ENCODE measurements at regions of chr7 and their contacts with region 1.

Region 1: DNA sequence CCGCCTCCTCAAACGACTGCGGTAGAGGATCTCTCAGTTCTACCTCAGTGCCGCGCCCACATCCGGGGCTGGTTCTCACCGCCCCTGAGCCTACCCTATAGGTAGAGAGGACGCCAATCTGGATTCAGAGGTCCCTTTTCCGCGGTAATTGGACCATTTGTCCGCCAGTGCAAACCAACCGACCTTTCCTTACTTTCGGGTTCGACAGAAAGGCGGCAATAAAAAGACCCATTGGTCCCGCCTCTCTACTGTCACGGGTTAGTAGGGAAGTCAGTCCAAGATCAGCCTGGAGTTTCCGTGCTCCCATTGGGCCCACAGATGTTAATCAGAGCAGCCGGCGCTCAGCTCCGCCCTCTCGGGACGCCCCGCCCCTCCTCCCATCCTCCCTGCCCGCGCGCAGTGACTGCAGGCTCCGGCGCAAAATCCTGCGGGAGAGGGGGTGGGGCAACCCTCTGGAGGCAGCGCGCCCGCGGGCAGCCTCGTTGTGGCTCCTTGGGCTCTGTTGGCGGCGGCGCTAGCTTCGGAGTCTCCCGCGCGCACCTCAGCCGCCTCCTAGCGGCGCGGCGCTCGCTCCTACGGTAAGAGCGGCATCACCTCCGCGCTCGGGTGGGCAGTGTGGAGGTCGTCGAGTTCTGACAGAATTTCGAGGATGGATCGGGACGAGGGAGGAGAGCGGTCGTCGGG is at the starts of genes PHTF2 and TMEM60:
- DNase-seq: peak; percentile 96
- ATAC-seq: peak; percentile 93
- H3K4me3 Mint-ChIP-seq: peak within 1 kb of the TSS; percentile 83
- H3K27ac Mint-ChIP-seq: peak within 1 kb of the TSS; percentile 94
- H3K4me1 Mint-ChIP-seq: peaks cover 68% of the 10 kb centered on the region
- H3K27me3 Mint-ChIP-seq: no peaks in the 10 kb centered on the region
- total RNA-seq, gene PHTF2: 25.5 to 26.7 TPM
- total RNA-seq, gene TMEM60: 7.9 to 10.1 TPM

Region 2: GRCh38 chr7:76393116-76394031 is 1405.2 kb before region 1 on chr7:
- CTCF ChIA-PET with region 1: no interaction called
- POLR2A ChIA-PET with region 1: no interaction called
- intact Hi-C with region 1: loop called in 1 of 2 experiments (anchors 5 kb)
- DNase-seq: peak; percentile 94
- ATAC-seq: peak; percentile 85
- H3K4me3 Mint-ChIP-seq: peak overlapping the region; percentile 76
- H3K27ac Mint-ChIP-seq: peak overlapping the region; percentile 98
- H3K4me1 Mint-ChIP-seq: peaks cover 22% of the 10 kb centered on the region
- H3K27me3 Mint-ChIP-seq: no peaks in the 10 kb centered on the region

Region 3: GRCh38 chr7:77498659-77499422 is 299.7 kb before region 1 on chr7:
- CTCF ChIA-PET with region 1: no interaction called
- POLR2A ChIA-PET with region 1: no interaction called
- intact Hi-C with region 1: no loop called
- DNase-seq: no peak
- ATAC-seq: no peak
- H3K4me3 Mint-ChIP-seq: no peak overlapping the region
- H3K27ac Mint-ChIP-seq: no peak overlapping the region
- H3K4me1 Mint-ChIP-seq: no peaks in the 10 kb centered on the region
- H3K27me3 Mint-ChIP-seq: peaks cover 2% of the 10 kb centered on the region

Region 4: GRCh38 chr7:77696198-77697028 is 102.1 kb before region 1 on chr7 and contains the start of gene RSBN1L:
- CTCF ChIA-PET with region 1: no interaction called
- POLR2A ChIA-PET with region 1: interaction called, 4 read pairs
- intact Hi-C with region 1: loop called (anchors 1 kb)
- DNase-seq: peak; percentile 99
- ATAC-seq: peak; percentile 98
- H3K4me3 Mint-ChIP-seq: peak within 1 kb of the TSS; percentile 99
- H3K27ac Mint-ChIP-seq: peak within 1 kb of the TSS; percentile 95
- H3K4me1 Mint-ChIP-seq: peaks cover 45% of the 10 kb centered on the region
- H3K27me3 Mint-ChIP-seq: no peaks in the 10 kb centered on the region
- total RNA-seq, gene RSBN1L: 21.0 to 26.3 TPM

Region 5: GRCh38 chr7:77830649-77831355 is 32.3 kb after region 1 on chr7:
- CTCF ChIA-PET with region 1: interaction called, 7 read pairs
- POLR2A ChIA-PET with region 1: no interaction called
- intact Hi-C with region 1: loop called (anchors 1 kb)
- DNase-seq: no peak
- ATAC-seq: no peak
- H3K4me3 Mint-ChIP-seq: no peak overlapping the region
- H3K27ac Mint-ChIP-seq: peak overlapping the region; percentile 71
- H3K4me1 Mint-ChIP-seq: peaks cover 58% of the 10 kb centered on the region
- H3K27me3 Mint-ChIP-seq: no peaks in the 10 kb centered on the region

Region 6: DNA sequence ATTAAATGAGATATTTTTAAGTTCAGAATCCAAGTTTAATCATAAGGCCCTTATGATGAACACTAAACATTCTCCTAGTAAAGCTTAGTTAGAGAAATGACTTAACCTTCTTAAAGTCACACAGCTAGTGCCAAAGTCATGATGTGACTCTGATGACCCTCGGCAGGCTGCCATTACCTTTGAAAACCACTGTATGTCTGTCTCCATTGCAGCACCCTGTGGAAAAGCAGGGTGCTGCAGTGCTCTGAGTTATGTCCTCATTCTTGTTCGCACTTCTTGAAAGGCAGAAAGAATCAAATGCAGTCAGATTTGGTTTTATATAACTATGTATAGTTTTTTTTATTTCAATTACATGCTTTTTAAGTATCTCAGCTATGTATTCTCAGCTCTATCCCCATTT is 105.1 kb after region 1 on chr7:
- CTCF ChIA-PET with region 1: no interaction called
- POLR2A ChIA-PET with region 1: no interaction called
- intact Hi-C with region 1: loop called (anchors 5 kb)
- DNase-seq: peak; percentile 30
- ATAC-seq: peak; percentile 79
- H3K4me3 Mint-ChIP-seq: no peak overlapping the region
- H3K27ac Mint-ChIP-seq: no peak overlapping the region
- H3K4me1 Mint-ChIP-seq: peaks cover 4% of the 10 kb centered on the region
- H3K27me3 Mint-ChIP-seq: no peaks in the 10 kb centered on the region

Region 7: DNA sequence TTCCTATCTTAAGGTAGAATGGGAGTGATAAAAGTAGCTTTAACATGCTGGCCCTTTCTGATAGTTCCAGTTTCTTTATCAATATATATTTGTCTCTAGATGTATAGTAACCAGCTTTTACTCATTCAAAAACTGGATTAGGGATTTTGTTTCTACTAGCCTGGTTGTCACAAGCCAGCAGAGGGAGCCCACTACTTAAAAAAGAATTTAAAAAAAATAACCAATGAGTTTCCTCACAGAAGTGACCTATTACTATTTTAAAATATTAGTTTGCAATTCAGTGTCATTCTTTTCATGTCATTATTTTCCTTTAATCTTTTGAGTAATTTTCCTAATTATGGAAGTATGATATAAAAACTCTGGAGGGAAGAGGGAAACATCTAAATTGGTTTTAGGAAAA is 142.1 kb after region 1 on chr7:
- CTCF ChIA-PET with region 1: interaction called, 5 read pairs
- POLR2A ChIA-PET with region 1: no interaction called
- intact Hi-C with region 1: loop called (anchors 2 to 5 kb)
- DNase-seq: peak; percentile 21
- ATAC-seq: no peak
- H3K4me3 Mint-ChIP-seq: no peak overlapping the region
- H3K27ac Mint-ChIP-seq: no peak overlapping the region
- H3K4me1 Mint-ChIP-seq: peaks cover 13% of the 10 kb centered on the region
- H3K27me3 Mint-ChIP-seq: no peaks in the 10 kb centered on the region

Region 8: DNA sequence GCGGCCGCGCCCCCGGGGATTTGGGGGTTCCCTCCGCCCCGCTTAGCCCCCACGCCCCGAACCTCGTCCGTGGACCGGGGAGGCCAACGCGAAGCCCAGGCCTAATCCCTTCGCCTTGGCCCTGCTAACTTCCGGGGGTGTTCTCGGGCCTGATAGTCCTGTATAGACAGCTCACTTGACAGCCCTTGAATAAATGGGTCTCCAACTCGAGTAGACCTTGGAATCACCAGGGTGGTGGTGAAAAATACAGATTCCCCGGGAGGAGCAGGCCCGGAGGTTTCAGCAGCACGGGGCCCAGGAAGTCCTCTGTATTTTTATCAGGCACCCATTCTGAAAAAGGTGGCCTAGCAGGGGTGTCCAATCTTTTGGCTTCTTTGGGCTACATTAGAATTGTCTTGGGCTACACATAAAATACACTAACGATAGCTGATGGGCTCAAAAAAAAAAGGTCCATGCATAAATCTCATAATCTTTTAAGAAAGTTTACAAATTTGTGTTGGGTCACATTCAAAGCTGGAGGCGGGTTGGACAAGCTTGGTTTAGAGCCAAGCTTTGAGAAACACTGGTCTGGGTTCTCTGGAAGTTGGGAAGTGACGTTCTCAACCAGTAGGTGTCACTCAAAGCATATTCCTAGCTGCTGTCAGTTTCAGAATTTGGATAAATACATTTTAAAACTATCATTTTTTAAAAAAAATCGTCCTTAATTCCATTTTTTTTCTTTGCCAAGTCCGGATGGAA is 221.8 kb after region 1 on chr7:
- CTCF ChIA-PET with region 1: interaction called, 4 read pairs
- POLR2A ChIA-PET with region 1: no interaction called
- intact Hi-C with region 1: loop called in 1 of 2 experiments (anchors 5 kb)
- DNase-seq: peak; percentile 45
- ATAC-seq: peak; percentile 60
- H3K4me3 Mint-ChIP-seq: peak overlapping the region; percentile 78
- H3K27ac Mint-ChIP-seq: peak overlapping the region; percentile 80
- H3K4me1 Mint-ChIP-seq: peaks cover 12% of the 10 kb centered on the region
- H3K27me3 Mint-ChIP-seq: peaks cover 21% of the 10 kb centered on the region